GM10248 (cell line): ENCODE measurements at regions of chr11 and their contacts with region 1.

Region 1: DNA sequence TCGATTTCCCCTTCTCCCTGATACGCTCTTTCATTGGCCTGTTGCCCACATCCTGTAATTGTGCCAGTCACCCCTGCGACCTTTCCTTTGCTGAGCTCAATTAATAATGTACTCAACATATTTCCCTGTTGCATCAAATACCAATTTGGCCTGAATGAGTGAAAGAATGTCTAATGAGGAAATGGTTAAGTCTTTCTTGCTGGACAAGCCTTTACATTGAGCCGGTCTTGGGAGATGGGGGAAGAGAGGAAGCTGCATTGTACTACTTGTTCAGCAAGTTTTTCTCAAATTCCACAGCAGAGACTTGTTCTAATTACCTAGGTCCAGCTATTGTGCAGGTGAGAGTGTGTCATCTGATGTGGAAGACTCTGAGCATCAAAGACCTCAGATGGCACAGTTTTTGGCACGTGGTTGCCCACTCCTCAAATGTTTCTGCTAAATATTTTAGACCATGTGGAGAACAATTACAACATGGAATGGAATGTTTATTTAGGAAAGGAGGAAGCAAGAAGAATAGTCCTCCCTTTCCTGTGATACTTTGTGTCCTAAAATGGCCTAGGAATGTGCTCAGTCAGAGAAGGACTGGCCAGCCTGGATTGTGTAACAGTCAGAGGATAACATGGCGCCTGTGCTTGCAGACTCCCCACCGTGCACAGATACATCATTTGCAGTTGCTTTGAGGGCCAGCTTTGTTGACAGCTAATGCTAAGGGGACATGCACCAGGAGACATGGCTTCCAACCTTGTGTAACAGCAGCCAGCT is 129.5 kb upstream of the E2F8 start:
- DNase-seq: no peak
- CTCF ChIP-seq: no peak

Region 2: GRCh38 chr11:19352771-19353160 is 17.5 kb before region 1 on chr11:
- CTCF ChIA-PET with region 1: interaction called, 16 read pairs
- POLR2A ChIA-PET with region 1: no interaction called
- DNase-seq: no peak
- CTCF ChIP-seq: no peak

Region 3: GRCh38 chr11:19380375-19380774 is 10.1 kb after region 1 on chr11:
- CTCF ChIA-PET with region 1: interaction called, 50 read pairs
- POLR2A ChIA-PET with region 1: no interaction called
- DNase-seq: no peak
- CTCF ChIP-seq: no peak